CD4-positive, alpha-beta T cell (primary cell): ENCODE measurements at regions of chr21 and their contacts with region 1.

Region 1: DNA sequence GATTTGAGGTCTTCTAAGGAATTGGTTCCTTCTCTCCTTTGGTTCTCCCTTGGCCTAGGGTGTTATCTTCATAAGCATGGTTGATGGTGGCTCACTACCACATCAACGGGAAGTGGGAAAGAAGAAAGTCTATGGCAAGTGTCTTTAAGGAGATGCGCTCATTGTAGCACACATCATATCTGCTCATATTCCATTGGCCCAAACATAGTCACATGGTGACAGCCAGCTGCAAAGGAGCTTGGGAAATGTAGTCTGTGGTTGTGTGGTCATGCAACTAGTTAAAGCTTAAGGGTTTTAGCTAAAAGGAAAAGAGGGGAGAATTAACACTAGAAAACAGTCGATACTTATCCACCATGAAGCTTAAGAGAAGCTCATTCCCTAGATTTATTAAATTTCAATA is 11.4 kb upstream of the MRPS6 start:
- DNase-seq: no peak
- ATAC-seq: no peak
- H3K4me3 ChIP-seq: no peak overlapping the region
- H3K4me3 Mint-ChIP-seq: no peak overlapping the region
- H3K27ac ChIP-seq: no peak overlapping the region
- H3K27ac Mint-ChIP-seq: no peak overlapping the region
- H3K4me1 ChIP-seq: no peaks in the 10 kb centered on the region
- H3K4me1 Mint-ChIP-seq: no peaks in the 10 kb centered on the region
- H3K27me3 ChIP-seq: no peaks in the 10 kb centered on the region
- H3K27me3 Mint-ChIP-seq: no peaks in the 10 kb centered on the region
- CTCF ChIP-seq: no peak

Region 2: GRCh38 chr21:34011660-34012059 is 50.3 kb before region 1 on chr21:
- CTCF ChIA-PET with region 1: no interaction called
- POLR2A ChIA-PET with region 1: no interaction called
- intact Hi-C with region 1: loop called in 1 of 2 experiments (anchors 1 kb)
- DNase-seq: no peak
- ATAC-seq: no peak
- H3K4me3 ChIP-seq: no peak overlapping the region
- H3K4me3 Mint-ChIP-seq: no peak overlapping the region
- H3K27ac ChIP-seq: no peak overlapping the region
- H3K27ac Mint-ChIP-seq: no peak overlapping the region
- H3K4me1 ChIP-seq: peaks cover 4% of the 10 kb centered on the region
- H3K4me1 Mint-ChIP-seq: no peaks in the 10 kb centered on the region
- H3K27me3 ChIP-seq: no peaks in the 10 kb centered on the region
- H3K27me3 Mint-ChIP-seq: no peaks in the 10 kb centered on the region
- CTCF ChIP-seq: no peak

Region 3: GRCh38 chr21:34745557-34746255 is 683.7 kb after region 1 on chr21:
- CTCF ChIA-PET with region 1: no interaction called
- POLR2A ChIA-PET with region 1: no interaction called
- intact Hi-C with region 1: no loop called
- DNase-seq: peak; percentile 12 to 77 (median 38)
- ATAC-seq: peak; percentile 73
- H3K4me3 ChIP-seq: no peak overlapping the region
- H3K4me3 Mint-ChIP-seq: peak overlapping the region; percentile 74
- H3K27ac ChIP-seq: no peak overlapping the region
- H3K27ac Mint-ChIP-seq: no peak overlapping the region
- H3K4me1 ChIP-seq: peaks cover 8% of the 10 kb centered on the region
- H3K4me1 Mint-ChIP-seq: peaks cover 5% of the 10 kb centered on the region
- H3K27me3 ChIP-seq: no peaks in the 10 kb centered on the region
- H3K27me3 Mint-ChIP-seq: no peaks in the 10 kb centered on the region
- CTCF ChIP-seq: peak; percentile 88